Spleen (tissue), 13 donors: ENCODE measurements at regions of chr18 and their contacts with region 1.

Region 1: GRCh38 chr18:2223849-2224248 is 347.5 kb downstream of the METTL4 start:
- DNase-seq: no peak
- H3K4me3 ChIP-seq: no peak overlapping the region
- H3K27ac ChIP-seq: no peak overlapping the region
- H3K4me1 ChIP-seq: no peaks in the 10 kb centered on the region
- H3K27me3 ChIP-seq: peaks cover 0 to 11% (median 0%) of the 10 kb centered on the region in 7 donors
- CTCF ChIP-seq: peak in 8 of 11 experiments; percentile 4 to 49 (median 40)
- POLR2A ChIP-seq: no peak

Region 2: DNA sequence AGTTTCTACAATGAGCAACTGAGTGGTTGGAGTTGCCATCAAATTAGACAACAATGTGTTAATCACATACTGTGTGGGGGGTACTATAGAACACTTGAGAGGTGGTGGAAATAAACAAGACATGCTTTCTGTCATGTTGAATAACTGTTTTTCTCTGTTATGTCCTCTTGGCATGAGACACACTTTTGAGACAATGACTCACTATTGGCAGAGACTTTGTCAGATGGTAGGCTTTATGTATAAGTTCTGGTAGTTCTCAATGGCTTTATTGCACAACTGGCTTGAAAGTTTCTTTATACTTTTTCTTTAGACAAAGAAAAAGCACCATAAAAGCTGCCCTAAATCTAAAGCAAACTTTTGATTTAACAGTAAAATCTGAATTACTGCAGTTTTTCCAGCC is 740.5 kb before region 1 on chr18:
- intact Hi-C with region 1: no loop called
- DNase-seq: no peak
- H3K4me3 ChIP-seq: no peak overlapping the region
- H3K27ac ChIP-seq: no peak overlapping the region
- H3K4me1 ChIP-seq: no peaks in the 10 kb centered on the region
- H3K27me3 ChIP-seq: no peaks in the 10 kb centered on the region
- CTCF ChIP-seq: no peak
- POLR2A ChIP-seq: no peak

Region 3: GRCh38 chr18:1585879-1586488 is 637.9 kb before region 1 on chr18:
- intact Hi-C with region 1: loop called (anchors 10 kb)
- DNase-seq: no peak
- H3K4me3 ChIP-seq: no peak overlapping the region
- H3K27ac ChIP-seq: no peak overlapping the region
- H3K4me1 ChIP-seq: peaks cover 0 to 4% (median 0%) of the 10 kb centered on the region in 6 donors
- H3K27me3 ChIP-seq: no peaks in the 10 kb centered on the region
- CTCF ChIP-seq: peak in 7 of 11 experiments; percentile 32 to 54 (median 41)
- POLR2A ChIP-seq: no peak

Region 4: DNA sequence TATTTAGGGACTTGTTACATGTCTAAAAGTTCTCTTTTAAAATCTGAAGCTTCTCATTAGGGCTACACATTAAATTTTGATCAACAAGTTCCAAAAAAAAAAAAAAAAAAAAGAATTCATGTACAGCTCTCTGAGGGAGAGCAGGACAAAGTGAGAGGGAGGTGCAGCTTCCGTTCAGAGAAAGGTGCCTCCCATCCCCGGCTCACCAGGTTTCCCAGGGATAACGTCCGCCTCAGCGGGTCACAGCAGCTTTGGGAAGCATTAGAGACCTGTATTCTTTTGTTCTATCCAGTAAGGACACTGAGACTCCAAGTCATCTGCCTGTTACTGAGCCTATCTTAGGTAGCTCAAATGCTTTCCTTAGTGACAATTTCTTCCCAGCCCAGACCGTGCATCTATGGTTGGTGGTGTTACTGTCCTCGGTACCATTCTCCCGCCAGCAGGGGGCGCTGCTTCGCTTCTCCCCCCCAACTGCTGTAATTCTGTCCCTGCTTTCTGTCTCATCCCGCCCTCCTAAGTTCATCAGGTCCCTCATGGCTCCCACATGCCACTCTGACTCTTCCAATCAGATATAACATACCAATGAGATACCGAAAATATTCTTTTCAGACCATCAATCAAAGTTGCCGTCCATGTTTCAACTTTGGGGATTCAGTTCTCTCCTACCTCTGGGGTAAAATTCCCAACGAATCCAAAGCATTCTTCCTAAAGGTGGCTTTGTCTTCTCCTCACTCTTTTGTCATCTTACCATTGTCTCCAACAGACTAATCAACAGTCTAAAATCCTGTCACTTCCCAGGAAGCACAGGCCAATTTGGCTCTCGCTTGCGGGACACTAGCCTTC is 119.0 kb before region 1 on chr18:
- intact Hi-C with region 1: loop called (anchors 10 kb)
- DNase-seq: peak; percentile 80
- H3K4me3 ChIP-seq: no peak overlapping the region
- H3K27ac ChIP-seq: no peak overlapping the region
- H3K4me1 ChIP-seq: no peaks in the 10 kb centered on the region
- H3K27me3 ChIP-seq: peaks cover 0 to 7% (median 0%) of the 10 kb centered on the region in 7 donors
- CTCF ChIP-seq: peak; percentile 30 to 75 (median 66)
- POLR2A ChIP-seq: no peak